Right cardiac atrium (tissue), 5 donors: ENCODE measurements at regions of chrX and their contacts with region 1.

Region 1: GRCh38 chrX:55057675-55058249 is 17.1 kb upstream of the PAGE2B start:
- DNase-seq: no peak
- ATAC-seq: peak; percentile 59 to 79
- H3K4me3 ChIP-seq: peak overlapping the region; percentile 28
- H3K27ac ChIP-seq: no peak overlapping the region
- H3K4me1 ChIP-seq: peaks cover 1% of the 10 kb centered on the region
- H3K27me3 ChIP-seq: no peaks in the 10 kb centered on the region

Region 2: GRCh38 chrX:54891573-54891972 is 166.2 kb before region 1 on chrX:
- intact Hi-C with region 1: loop called in 3 of 4 experiments (anchors 5 to 10 kb)
- DNase-seq: peak in 1 of 3 donors; percentile 40
- ATAC-seq: peak in 1 of 2 donors; percentile 59
- H3K4me3 ChIP-seq: no peak overlapping the region
- H3K27ac ChIP-seq: no peak overlapping the region
- H3K4me1 ChIP-seq: no peaks in the 10 kb centered on the region
- H3K27me3 ChIP-seq: no peaks in the 10 kb centered on the region

Region 3: DNA sequence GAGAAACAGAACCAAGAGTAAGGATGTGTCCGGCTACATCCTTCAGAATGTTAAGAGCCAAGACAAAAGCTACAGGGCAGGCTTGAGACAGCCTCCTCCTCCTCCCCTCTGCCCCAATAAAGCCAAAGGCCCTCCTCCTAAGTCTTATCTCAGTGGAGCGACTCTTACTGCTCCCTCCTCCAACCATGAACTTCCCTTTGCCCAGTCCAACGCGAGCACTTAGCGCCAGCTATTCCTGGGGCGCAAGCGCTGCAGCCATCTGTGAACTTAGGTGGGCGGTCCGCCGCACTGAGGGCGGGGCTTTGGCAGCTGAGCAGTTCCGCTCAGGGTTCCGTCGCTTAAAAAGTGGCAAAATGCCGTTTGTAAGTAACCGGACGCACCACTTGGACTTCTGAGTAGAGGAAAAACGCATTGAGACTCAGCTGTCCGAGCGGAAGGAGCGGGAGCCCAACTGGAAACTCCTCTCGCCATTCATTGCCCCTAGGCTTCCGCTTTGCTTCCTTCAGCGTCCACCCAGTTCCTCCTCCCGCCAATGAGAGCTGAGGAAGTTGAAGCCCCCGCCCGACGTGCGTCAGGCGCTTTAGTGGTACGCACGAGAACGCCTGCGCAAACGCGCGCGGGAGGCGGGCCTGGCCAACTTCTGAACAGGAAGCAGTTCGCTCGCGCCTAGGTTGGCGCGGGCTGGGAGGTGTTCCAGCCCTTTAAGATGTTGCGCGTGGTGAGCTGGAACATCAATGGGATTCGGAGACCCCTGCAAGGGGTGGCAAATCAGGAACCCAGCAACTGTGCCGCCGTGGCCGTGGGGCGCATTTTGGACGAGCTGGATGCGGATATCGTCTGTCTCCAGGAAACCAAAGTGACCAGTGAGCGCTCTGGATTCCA is 57.8 kb before region 1 on chrX and contains the start of gene APEX2:
- intact Hi-C with region 1: no loop called
- DNase-seq: peak; percentile 93 to 97 (median 96)
- ATAC-seq: peak; percentile 99
- H3K4me3 ChIP-seq: peak within 1 kb of the TSS; percentile 80
- H3K27ac ChIP-seq: peak within 1 kb of the TSS; percentile 93
- H3K4me1 ChIP-seq: peaks cover 1% of the 10 kb centered on the region
- H3K27me3 ChIP-seq: no peaks in the 10 kb centered on the region
- total RNA-seq, gene APEX2: 7.6 to 10.7 (median 8.1) TPM